Naive thymus-derived CD8-positive, alpha-beta T cell (primary cell): ENCODE measurements at regions of chr13 and their contacts with region 1.

Region 1: GRCh38 chr13:41456768-41457588 is at the start of gene RGCC:
- DNase-seq: peak; percentile 81 to 99 (median 96)
- ATAC-seq: peak; percentile 66 to 71
- H3K4me3 Mint-ChIP-seq: peak within 1 kb of the TSS; percentile 82 to 98 (median 96)
- H3K27ac Mint-ChIP-seq: peak within 1 kb of the TSS; percentile 94 to 99 (median 98)
- H3K4me1 Mint-ChIP-seq: peaks cover 28 to 38% (median 32%) of the 10 kb centered on the region in 4 donors
- H3K27me3 Mint-ChIP-seq: peaks cover 0 to 5% (median 0%) of the 10 kb centered on the region in 5 donors
- polyA plus RNA-seq, gene RGCC: 84.8 to 193 (median 97.2) TPM

Region 2: GRCh38 chr13:41356786-41357185 is 100.2 kb before region 1 on chr13:
- POLR2A ChIA-PET with region 1: interaction called, 22 read pairs
- DNase-seq: peak; percentile 16 to 69 (median 30)
- ATAC-seq: peak; percentile 77 to 82
- H3K4me3 Mint-ChIP-seq: peak overlapping the region; percentile 60 to 87 (median 78)
- H3K27ac Mint-ChIP-seq: peak overlapping the region; percentile 90 to 97 (median 94)
- H3K4me1 Mint-ChIP-seq: peaks cover 32 to 77% (median 72%) of the 10 kb centered on the region in 4 donors
- H3K27me3 Mint-ChIP-seq: no peaks in the 10 kb centered on the region

Region 3: DNA sequence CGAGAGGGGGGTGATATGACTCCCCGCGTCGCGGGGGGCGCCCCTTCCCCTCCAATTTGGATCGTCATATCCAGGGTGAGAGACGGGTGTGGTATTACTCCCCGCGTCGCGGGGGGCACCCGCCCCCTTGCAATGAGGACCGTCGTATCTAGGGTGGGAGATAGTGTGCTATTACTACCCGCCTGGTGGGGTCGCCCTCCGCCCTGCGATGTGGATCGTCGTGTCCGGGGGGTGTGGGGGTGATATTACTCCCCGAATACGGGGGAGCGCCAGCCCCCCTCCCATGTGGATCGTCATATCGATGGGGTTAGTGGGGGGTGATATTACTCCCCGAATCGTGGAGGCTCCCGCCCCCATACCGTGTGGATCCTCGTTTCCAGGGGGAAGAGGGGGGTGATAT is 28.8 kb before region 1 on chr13:
- POLR2A ChIA-PET with region 1: no interaction called
- DNase-seq: peak; percentile 18 to 83 (median 58)
- ATAC-seq: peak; percentile 97 to 98
- H3K4me3 Mint-ChIP-seq: peak overlapping the region; percentile 39 to 88 (median 72)
- H3K27ac Mint-ChIP-seq: peak overlapping the region in 3 of 10 donors; percentile 19 to 62 (median 59)
- H3K4me1 Mint-ChIP-seq: peaks cover 4 to 14% (median 7%) of the 10 kb centered on the region in 4 donors
- H3K27me3 Mint-ChIP-seq: peaks cover 0 to 4% (median 0%) of the 10 kb centered on the region in 5 donors

Region 4: GRCh38 chr13:41492404-41493260 is 35.7 kb after region 1 on chr13:
- POLR2A ChIA-PET with region 1: interaction called, 62 read pairs
- DNase-seq: peak in 5 of 10 donors; percentile 14 to 69 (median 66)
- ATAC-seq: peak; percentile 76 to 80
- H3K4me3 Mint-ChIP-seq: peak overlapping the region; percentile 63 to 88 (median 78)
- H3K27ac Mint-ChIP-seq: peak overlapping the region; percentile 96 to 100 (median 99)
- H3K4me1 Mint-ChIP-seq: peaks cover 43 to 89% (median 84%) of the 10 kb centered on the region in 4 donors
- H3K27me3 Mint-ChIP-seq: no peaks in the 10 kb centered on the region

Region 5: GRCh38 chr13:41500511-41500910 is 43.5 kb after region 1 on chr13:
- POLR2A ChIA-PET with region 1: interaction called, 30 read pairs
- DNase-seq: peak in 4 of 10 donors; percentile 13 to 23 (median 14)
- ATAC-seq: peak; percentile 82 to 86
- H3K4me3 Mint-ChIP-seq: peak overlapping the region in 6 of 10 donors; percentile 3 to 74 (median 42)
- H3K27ac Mint-ChIP-seq: peak overlapping the region; percentile 20 to 94 (median 79)
- H3K4me1 Mint-ChIP-seq: peaks cover 37 to 76% (median 73%) of the 10 kb centered on the region in 4 donors
- H3K27me3 Mint-ChIP-seq: no peaks in the 10 kb centered on the region

Region 6: DNA sequence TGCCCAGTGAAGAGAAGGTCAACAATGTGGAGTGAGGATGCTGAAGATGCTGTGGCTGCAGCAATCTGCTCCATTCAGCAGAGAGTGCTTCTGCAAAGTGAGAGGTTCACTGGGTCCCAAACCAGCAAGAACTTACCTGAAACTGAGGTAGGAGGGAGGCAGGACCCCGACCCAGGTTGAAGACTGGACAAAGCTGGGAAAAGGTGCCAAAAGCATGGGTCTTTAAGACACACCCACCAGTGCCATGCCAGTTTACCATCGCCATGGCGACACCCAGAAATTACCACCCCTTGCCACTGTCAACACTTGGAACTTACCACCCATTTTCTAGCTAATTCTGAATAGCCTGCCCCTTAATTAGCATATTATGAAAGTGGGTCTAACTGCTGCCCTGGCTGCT is 71.0 kb after region 1 on chr13:
- POLR2A ChIA-PET with region 1: no interaction called
- DNase-seq: no peak
- ATAC-seq: no peak
- H3K4me3 Mint-ChIP-seq: no peak overlapping the region
- H3K27ac Mint-ChIP-seq: peak overlapping the region in 2 of 10 donors; percentile 54 to 75
- H3K4me1 Mint-ChIP-seq: peaks cover 0 to 13% (median under 1%) of the 10 kb centered on the region in 4 donors
- H3K27me3 Mint-ChIP-seq: no peaks in the 10 kb centered on the region

Region 7: DNA sequence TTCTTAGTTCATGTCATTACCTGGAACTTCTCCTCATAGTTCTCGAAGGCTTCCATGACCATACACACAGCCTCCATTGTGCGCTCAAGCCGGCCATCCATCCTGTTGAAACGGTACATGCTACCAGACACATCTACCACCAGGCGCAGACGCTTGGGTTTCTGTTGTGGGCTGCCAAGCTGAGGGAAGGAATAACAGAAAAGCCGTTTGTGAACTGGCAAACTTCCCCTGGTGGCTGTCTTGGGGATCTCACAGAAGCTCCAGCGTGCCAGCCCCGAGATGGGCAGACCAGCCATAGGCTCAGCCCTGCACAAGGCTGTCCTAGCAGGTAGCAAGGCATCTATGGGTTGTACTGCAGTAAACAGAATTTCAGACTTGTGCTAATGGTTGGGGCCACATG is 130.5 kb after region 1 on chr13:
- POLR2A ChIA-PET with region 1: interaction called, 20 read pairs
- DNase-seq: peak; percentile 8 to 81 (median 38)
- ATAC-seq: peak; percentile 99
- H3K4me3 Mint-ChIP-seq: no peak overlapping the region
- H3K27ac Mint-ChIP-seq: peak overlapping the region in 6 of 10 donors; percentile 6 to 72 (median 64)
- H3K4me1 Mint-ChIP-seq: peaks cover 3 to 7% (median 6%) of the 10 kb centered on the region in 4 donors
- H3K27me3 Mint-ChIP-seq: no peaks in the 10 kb centered on the region

Region 8: DNA sequence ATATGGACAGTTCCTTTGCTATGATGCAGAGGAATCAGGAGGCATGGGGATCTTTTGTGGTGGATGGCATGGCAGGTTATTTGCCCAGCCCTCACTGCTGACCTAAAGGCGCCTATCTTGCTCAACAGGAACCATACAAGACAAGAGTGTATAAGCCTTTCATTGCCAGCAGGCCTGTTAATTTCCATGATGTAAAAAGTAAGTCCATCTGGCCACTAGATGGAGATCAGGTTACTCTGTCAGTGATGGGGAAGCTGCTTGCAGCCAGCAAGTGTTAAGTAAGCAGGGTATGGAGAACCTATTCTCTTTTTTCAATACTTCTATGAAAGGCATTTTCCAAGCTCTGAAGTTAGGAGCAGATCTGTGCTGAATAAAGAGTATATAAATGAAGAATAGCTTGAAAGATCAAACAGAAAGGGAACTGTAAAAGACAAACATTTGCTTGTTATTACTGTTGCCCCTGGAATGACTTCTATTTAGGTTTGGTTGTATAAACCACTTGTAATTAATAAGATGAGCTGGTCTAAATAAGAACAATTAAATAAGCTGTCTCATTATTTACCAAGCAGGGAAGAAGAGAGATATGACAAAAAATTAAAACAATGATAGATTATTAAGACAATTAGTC is 211.3 kb after region 1 on chr13:
- POLR2A ChIA-PET with region 1: no interaction called
- DNase-seq: peak in 8 of 10 donors; percentile 2 to 58 (median 28)
- ATAC-seq: peak; percentile 73 to 84
- H3K4me3 Mint-ChIP-seq: no peak overlapping the region
- H3K27ac Mint-ChIP-seq: no peak overlapping the region
- H3K4me1 Mint-ChIP-seq: no peaks in the 10 kb centered on the region
- H3K27me3 Mint-ChIP-seq: peaks cover 0 to 3% (median 0%) of the 10 kb centered on the region in 5 donors